ENCODE measurements at regions of chr4 and their contacts with region 1.

Region 1: GRCh38 chr4:7081891-7082471 is 14.1 kb upstream of the GRPEL1 start:
- DNase-seq: peak; percentile 81 to 86
- H3K4me3 ChIP-seq: no peak overlapping the region
- H3K4me1 ChIP-seq: peaks cover 31% of the 10 kb centered on the region
- H3K27me3 ChIP-seq: no peaks in the 10 kb centered on the region

Region 2: GRCh38 chr4:6269616-6270511 is 812.1 kb before region 1 on chr4 and contains the start of gene WFS1:
- in situ Hi-C with region 1: loop called (anchors 25 kb)
- DNase-seq: peak; percentile 92 to 99
- H3K4me3 ChIP-seq: peak within 1 kb of the TSS; percentile 85
- H3K4me1 ChIP-seq: peaks cover 4% of the 10 kb centered on the region
- H3K27me3 ChIP-seq: no peaks in the 10 kb centered on the region

Region 3: GRCh38 chr4:6892190-6892908 is 189.6 kb before region 1 on chr4:
- in situ Hi-C with region 1: no loop called
- DNase-seq: peak; percentile 43 to 78
- H3K4me3 ChIP-seq: no peak overlapping the region
- H3K4me1 ChIP-seq: peaks cover 13% of the 10 kb centered on the region
- H3K27me3 ChIP-seq: no peaks in the 10 kb centered on the region